ENCODE measurements at regions of chr11 and their contacts with region 1.

Region 1: DNA sequence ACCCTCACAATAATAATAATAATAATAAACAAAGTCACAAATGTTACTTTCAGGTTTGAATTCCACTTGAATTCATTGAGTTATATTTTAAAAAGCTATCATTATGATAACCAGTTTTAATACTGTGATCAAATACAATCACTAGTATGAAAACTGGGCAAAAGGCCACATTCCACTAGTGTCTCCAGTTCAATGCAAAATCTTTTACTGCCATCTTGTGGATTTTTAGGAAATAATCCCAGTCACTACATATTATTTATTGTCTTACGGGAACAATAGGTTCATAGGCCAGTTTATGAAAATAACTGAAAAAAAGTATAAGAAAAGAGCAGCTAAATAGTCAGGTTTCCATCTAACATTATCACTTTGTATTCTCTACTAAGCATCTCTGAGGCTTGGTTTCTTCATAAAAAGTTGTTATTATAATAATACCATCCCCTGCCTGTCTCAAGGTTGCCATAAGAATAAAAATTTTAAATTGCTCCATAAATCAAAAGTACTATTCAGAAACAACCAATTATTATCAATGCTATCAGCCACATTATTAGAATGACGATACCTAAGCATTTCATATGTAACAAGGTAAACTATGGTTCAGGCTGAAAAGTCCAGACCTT is 533.9 kb upstream of the CCDC90B start:
- DNase-seq: peak in 5 of 9 donors; percentile 3 to 13 (median 10)
- ATAC-seq: no peak
- H3K4me3 ChIP-seq: no peak overlapping the region
- H3K4me3 Mint-ChIP-seq: no peak overlapping the region
- H3K27ac ChIP-seq: no peak overlapping the region
- H3K27ac Mint-ChIP-seq: no peak overlapping the region
- H3K4me1 ChIP-seq: no peaks in the 10 kb centered on the region
- H3K4me1 Mint-ChIP-seq: no peaks in the 10 kb centered on the region
- H3K27me3 ChIP-seq: no peaks in the 10 kb centered on the region
- H3K27me3 Mint-ChIP-seq: peaks cover 0 to 4% (median 3%) of the 10 kb centered on the region in 5 donors

Region 2: DNA sequence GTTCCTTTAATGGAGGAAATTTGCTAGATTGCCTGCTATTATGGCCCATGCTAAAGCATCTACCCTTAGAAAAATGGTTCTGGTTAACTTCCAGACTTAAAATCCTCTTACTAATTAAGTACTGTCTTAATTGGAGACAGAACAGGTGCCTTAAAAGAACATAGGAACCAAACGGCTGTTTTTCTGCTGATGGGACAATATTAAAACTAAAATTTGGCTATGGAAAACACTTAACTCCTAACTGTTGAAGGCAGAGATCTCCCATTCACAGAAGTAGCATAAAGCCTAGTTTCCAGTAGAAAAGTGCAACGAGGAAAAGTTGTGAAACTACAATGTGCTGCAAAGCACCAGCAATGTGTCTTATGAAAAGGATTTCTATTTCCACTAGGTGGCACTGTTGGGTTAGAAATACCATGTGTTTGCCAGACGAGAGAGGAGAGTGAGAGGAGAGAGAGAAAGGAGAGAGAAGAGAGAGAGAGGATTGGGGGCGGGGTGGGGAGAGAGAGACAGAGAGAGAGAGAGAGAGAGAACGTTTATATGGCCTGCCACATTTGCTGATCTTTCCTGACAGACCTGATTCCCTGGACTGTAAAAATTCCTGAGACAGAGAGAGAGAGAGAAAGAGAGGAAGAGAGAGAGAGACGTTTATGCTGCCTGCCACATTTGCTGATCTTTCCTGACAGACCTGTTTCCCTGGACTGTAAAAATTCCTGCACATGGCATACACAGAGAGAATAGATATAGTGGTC is 1137.9 kb before region 1 on chr11:
- CTCF ChIA-PET with region 1: no interaction called
- POLR2A ChIA-PET with region 1: no interaction called
- intact Hi-C with region 1: loop called in 1 of 2 experiments (anchors 2 kb)
- DNase-seq: peak in 7 of 9 donors; percentile 24 to 55 (median 38)
- ATAC-seq: peak; percentile 72
- H3K4me3 ChIP-seq: no peak overlapping the region
- H3K4me3 Mint-ChIP-seq: peak overlapping the region in 1 of 10 donors; percentile 5
- H3K27ac ChIP-seq: no peak overlapping the region
- H3K27ac Mint-ChIP-seq: peak overlapping the region in 2 of 9 donors; percentile 2 to 19
- H3K4me1 ChIP-seq: no peaks in the 10 kb centered on the region
- H3K4me1 Mint-ChIP-seq: peaks cover 0 to 5% (median 0%) of the 10 kb centered on the region in 7 donors
- H3K27me3 ChIP-seq: no peaks in the 10 kb centered on the region
- H3K27me3 Mint-ChIP-seq: peaks cover 8 to 20% (median 17%) of the 10 kb centered on the region in 5 donors

Region 3: GRCh38 chr11:82775736-82776346 is 1044.2 kb before region 1 on chr11:
- CTCF ChIA-PET with region 1: no interaction called
- POLR2A ChIA-PET with region 1: no interaction called
- intact Hi-C with region 1: loop called (anchors 5 kb)
- DNase-seq: peak in 7 of 9 donors; percentile 6 to 34 (median 16)
- ATAC-seq: peak; percentile 82
- H3K4me3 ChIP-seq: no peak overlapping the region
- H3K4me3 Mint-ChIP-seq: no peak overlapping the region
- H3K27ac ChIP-seq: no peak overlapping the region
- H3K27ac Mint-ChIP-seq: no peak overlapping the region
- H3K4me1 ChIP-seq: no peaks in the 10 kb centered on the region
- H3K4me1 Mint-ChIP-seq: peaks cover 0 to 2% (median 0%) of the 10 kb centered on the region in 7 donors
- H3K27me3 ChIP-seq: no peaks in the 10 kb centered on the region
- H3K27me3 Mint-ChIP-seq: peaks cover 0 to 33% (median 0%) of the 10 kb centered on the region in 5 donors

Region 4: DNA sequence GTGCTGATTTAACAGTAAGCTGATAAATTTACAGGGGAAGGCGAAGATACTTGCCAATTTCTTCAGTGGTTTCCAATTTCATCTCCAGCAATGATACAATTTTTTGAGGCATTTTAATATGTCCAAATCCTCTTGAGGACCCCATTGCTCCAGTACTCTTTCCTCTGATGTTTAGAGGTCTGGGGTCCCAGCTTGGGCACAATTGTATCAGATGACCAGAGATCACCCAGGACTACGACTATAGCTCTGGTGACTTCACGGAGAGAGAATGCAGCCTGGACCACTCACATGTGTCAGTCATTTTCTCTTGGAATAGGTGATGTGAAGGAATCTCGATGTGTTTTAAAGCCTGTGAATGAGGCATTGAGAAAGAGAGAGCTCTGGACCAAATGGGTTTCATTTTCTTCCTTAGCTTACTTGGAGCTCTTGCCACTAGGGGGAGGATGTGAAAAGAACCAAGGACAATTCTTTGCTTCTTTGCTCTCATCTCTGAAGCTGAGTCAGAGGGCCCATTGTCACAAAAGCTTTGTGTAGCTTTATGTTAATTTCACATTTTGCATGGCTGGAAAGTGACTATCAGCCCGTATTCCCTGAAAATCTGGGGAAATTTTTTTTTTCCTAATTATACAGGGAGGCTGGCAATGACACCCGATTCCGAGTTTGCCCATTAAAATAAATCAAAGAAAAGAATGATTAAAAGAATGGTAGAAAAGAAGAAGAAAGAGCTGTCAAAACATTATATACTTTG is 527.2 kb before region 1 on chr11:
- CTCF ChIA-PET with region 1: no interaction called
- POLR2A ChIA-PET with region 1: no interaction called
- intact Hi-C with region 1: loop called (anchors 1 to 2 kb)
- DNase-seq: peak in 6 of 9 donors; percentile 23 to 41 (median 31)
- ATAC-seq: peak; percentile 85
- H3K4me3 ChIP-seq: no peak overlapping the region
- H3K4me3 Mint-ChIP-seq: peak overlapping the region in 8 of 10 donors; percentile 24 to 80 (median 63)
- H3K27ac ChIP-seq: no peak overlapping the region
- H3K27ac Mint-ChIP-seq: no peak overlapping the region
- H3K4me1 ChIP-seq: no peaks in the 10 kb centered on the region
- H3K4me1 Mint-ChIP-seq: peaks cover 2 to 6% (median 4%) of the 10 kb centered on the region in 7 donors
- H3K27me3 ChIP-seq: no peaks in the 10 kb centered on the region
- H3K27me3 Mint-ChIP-seq: peaks cover 0 to 29% (median 4%) of the 10 kb centered on the region in 5 donors

Region 5: GRCh38 chr11:83725728-83726127 is 94.3 kb before region 1 on chr11:
- CTCF ChIA-PET with region 1: no interaction called
- POLR2A ChIA-PET with region 1: no interaction called
- intact Hi-C with region 1: no loop called
- DNase-seq: no peak
- ATAC-seq: no peak
- H3K4me3 ChIP-seq: no peak overlapping the region
- H3K4me3 Mint-ChIP-seq: no peak overlapping the region
- H3K27ac ChIP-seq: no peak overlapping the region
- H3K27ac Mint-ChIP-seq: no peak overlapping the region
- H3K4me1 ChIP-seq: no peaks in the 10 kb centered on the region
- H3K4me1 Mint-ChIP-seq: peaks cover 0 to 12% (median 7%) of the 10 kb centered on the region in 7 donors
- H3K27me3 ChIP-seq: no peaks in the 10 kb centered on the region
- H3K27me3 Mint-ChIP-seq: peaks cover 5 to 45% (median 10%) of the 10 kb centered on the region in 5 donors

Region 6: GRCh38 chr11:83773950-83774880 is 45.8 kb before region 1 on chr11:
- CTCF ChIA-PET with region 1: no interaction called
- POLR2A ChIA-PET with region 1: no interaction called
- intact Hi-C with region 1: loop called in 1 of 2 experiments (anchors 5 kb)
- DNase-seq: no peak
- ATAC-seq: no peak
- H3K4me3 ChIP-seq: no peak overlapping the region
- H3K4me3 Mint-ChIP-seq: no peak overlapping the region
- H3K27ac ChIP-seq: no peak overlapping the region
- H3K27ac Mint-ChIP-seq: no peak overlapping the region
- H3K4me1 ChIP-seq: no peaks in the 10 kb centered on the region
- H3K4me1 Mint-ChIP-seq: peaks cover 0 to 2% (median 0%) of the 10 kb centered on the region in 7 donors
- H3K27me3 ChIP-seq: no peaks in the 10 kb centered on the region
- H3K27me3 Mint-ChIP-seq: peaks cover 0 to 13% (median 4%) of the 10 kb centered on the region in 5 donors

Region 7: DNA sequence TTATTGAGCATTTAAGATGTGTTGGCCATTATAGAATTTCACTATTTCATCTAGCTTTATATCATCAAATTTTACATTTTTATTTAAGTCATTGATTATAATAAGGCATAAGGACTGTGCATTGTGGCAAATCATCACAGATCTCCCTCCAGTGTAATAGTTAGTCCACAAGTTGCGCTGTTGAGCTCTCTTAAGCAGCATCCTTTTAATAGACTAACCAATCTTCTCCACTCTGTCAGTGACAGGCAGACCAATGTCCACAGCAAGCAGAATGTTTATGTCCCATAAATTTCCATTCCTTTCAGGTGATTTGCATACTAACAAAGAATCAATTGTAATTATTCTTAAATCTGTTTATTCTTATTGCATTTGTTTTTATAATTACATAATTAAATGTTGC is 61.4 kb after region 1 on chr11:
- CTCF ChIA-PET with region 1: no interaction called
- POLR2A ChIA-PET with region 1: no interaction called
- intact Hi-C with region 1: no loop called
- DNase-seq: no peak
- ATAC-seq: no peak
- H3K4me3 ChIP-seq: no peak overlapping the region
- H3K4me3 Mint-ChIP-seq: no peak overlapping the region
- H3K27ac ChIP-seq: no peak overlapping the region
- H3K27ac Mint-ChIP-seq: no peak overlapping the region
- H3K4me1 ChIP-seq: no peaks in the 10 kb centered on the region
- H3K4me1 Mint-ChIP-seq: no peaks in the 10 kb centered on the region
- H3K27me3 ChIP-seq: no peaks in the 10 kb centered on the region
- H3K27me3 Mint-ChIP-seq: peaks cover 0 to 7% (median 0%) of the 10 kb centered on the region in 5 donors

Region 8: DNA sequence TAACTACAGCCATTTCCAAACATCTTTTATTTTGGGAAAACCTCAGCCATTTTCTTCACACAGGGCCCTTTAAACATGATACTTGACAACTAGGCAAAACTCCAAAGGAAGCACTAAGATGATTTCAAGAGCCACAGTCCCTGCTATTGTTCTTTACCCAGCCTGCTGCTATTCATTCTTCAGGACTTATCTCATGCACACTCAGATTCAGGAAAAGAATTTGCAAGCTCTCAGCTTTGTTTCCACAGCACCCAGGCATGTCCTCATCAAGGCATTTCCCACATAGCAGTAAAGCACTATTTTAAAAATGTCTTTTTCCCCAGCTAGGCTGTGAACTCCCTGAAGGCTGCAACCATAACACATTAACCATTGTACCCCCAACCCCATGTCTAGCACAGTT is 75.5 kb after region 1 on chr11:
- CTCF ChIA-PET with region 1: no interaction called
- POLR2A ChIA-PET with region 1: no interaction called
- intact Hi-C with region 1: no loop called
- DNase-seq: no peak
- ATAC-seq: no peak
- H3K4me3 ChIP-seq: no peak overlapping the region
- H3K4me3 Mint-ChIP-seq: no peak overlapping the region
- H3K27ac ChIP-seq: no peak overlapping the region
- H3K27ac Mint-ChIP-seq: no peak overlapping the region
- H3K4me1 ChIP-seq: no peaks in the 10 kb centered on the region
- H3K4me1 Mint-ChIP-seq: no peaks in the 10 kb centered on the region
- H3K27me3 ChIP-seq: no peaks in the 10 kb centered on the region
- H3K27me3 Mint-ChIP-seq: peaks cover 0 to 4% (median 0%) of the 10 kb centered on the region in 5 donors

Measured in naive thymus-derived CD4-positive, alpha-beta T cell (primary cell).